Prostate gland (tissue), 2 donors: ENCODE measurements at regions of chr16 and their contacts with region 1.

Region 1: GRCh38 chr16:73713778-73714495 is 582.7 kb upstream of the PSMD7 start:
- DNase-seq: no peak
- H3K4me3 ChIP-seq: no peak overlapping the region
- H3K27ac ChIP-seq: no peak overlapping the region
- H3K4me1 ChIP-seq: no peaks in the 10 kb centered on the region
- H3K27me3 ChIP-seq: no peaks in the 10 kb centered on the region
- CTCF ChIP-seq: no peak
- POLR2A ChIP-seq: no peak

Region 2: DNA sequence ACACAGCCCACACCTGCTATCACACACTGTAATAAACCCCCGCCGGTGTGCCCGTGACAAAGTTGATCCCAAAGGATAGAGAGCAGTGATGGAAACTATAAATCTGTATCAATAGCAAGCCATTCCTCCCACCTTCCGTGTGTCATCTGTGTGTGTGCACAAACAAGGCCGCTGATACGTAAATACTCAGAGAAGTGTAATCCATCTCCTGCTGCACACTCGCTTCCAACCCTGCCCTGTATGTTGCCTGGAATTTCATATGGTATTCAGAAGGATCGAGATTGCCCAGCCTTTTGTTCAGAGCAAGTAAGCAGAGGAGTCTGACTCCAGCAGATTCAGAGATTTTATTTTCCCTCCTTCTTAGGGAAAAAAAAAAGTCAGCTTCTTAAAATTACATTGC is 84.9 kb before region 1 on chr16:
- intact Hi-C with region 1: no loop called
- DNase-seq: no peak
- H3K4me3 ChIP-seq: no peak overlapping the region
- H3K27ac ChIP-seq: no peak overlapping the region
- H3K4me1 ChIP-seq: no peaks in the 10 kb centered on the region
- H3K27me3 ChIP-seq: no peaks in the 10 kb centered on the region
- CTCF ChIP-seq: no peak
- POLR2A ChIP-seq: no peak

Region 3: GRCh38 chr16:73794994-73795393 is 81.1 kb after region 1 on chr16:
- intact Hi-C with region 1: loop called (anchors 10 kb)
- DNase-seq: peak; percentile 5
- H3K4me3 ChIP-seq: no peak overlapping the region
- H3K27ac ChIP-seq: no peak overlapping the region
- H3K4me1 ChIP-seq: no peaks in the 10 kb centered on the region
- H3K27me3 ChIP-seq: no peaks in the 10 kb centered on the region
- CTCF ChIP-seq: no peak
- POLR2A ChIP-seq: no peak

Region 4: GRCh38 chr16:73846356-73846755 is 132.4 kb after region 1 on chr16:
- intact Hi-C with region 1: no loop called
- DNase-seq: no peak
- H3K4me3 ChIP-seq: no peak overlapping the region
- H3K27ac ChIP-seq: no peak overlapping the region
- H3K4me1 ChIP-seq: no peaks in the 10 kb centered on the region
- H3K27me3 ChIP-seq: no peaks in the 10 kb centered on the region
- CTCF ChIP-seq: no peak
- POLR2A ChIP-seq: no peak

Region 5: GRCh38 chr16:73916829-73917594 is 203.1 kb after region 1 on chr16:
- intact Hi-C with region 1: no loop called
- DNase-seq: no peak
- H3K4me3 ChIP-seq: no peak overlapping the region
- H3K27ac ChIP-seq: no peak overlapping the region
- H3K4me1 ChIP-seq: no peaks in the 10 kb centered on the region
- H3K27me3 ChIP-seq: no peaks in the 10 kb centered on the region
- CTCF ChIP-seq: no peak
- POLR2A ChIP-seq: no peak